ENCODE measurements at regions of chr3 and their contacts with region 1.

Region 1: DNA sequence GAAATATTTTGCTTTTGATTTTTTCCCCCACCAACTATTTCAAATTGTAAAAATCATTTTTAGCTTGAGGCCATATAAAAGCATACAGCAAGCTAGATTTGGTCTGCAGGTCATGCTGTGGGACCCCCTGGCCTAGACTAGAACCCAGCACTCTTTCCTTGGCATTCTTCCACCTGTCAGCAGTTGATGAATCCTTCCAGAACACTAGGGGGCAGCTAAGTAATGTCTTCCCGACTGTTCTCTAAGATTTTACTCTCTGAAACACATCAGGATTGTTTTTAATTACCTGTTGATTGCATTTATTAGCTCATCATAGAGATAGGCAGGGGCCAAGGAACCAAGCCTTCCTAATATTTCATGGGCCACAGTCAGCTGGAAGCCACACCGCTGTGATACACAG is 174.5 kb downstream of the CACNA1D start:
- DNase-seq: no peak
- H3K4me3 ChIP-seq: no peak overlapping the region
- H3K27ac ChIP-seq: no peak overlapping the region
- H3K4me1 ChIP-seq: no peaks in the 10 kb centered on the region
- H3K27me3 ChIP-seq: no peaks in the 10 kb centered on the region
- CTCF ChIP-seq: peak in 2 of 3 experiments; percentile 48 to 57; a peak in 3 of 4 replicates
- EP300 ChIP-seq: no peak
- POLR2A ChIP-seq: no peak
- RAD21 ChIP-seq: peak; percentile 59 to 71

Region 2: DNA sequence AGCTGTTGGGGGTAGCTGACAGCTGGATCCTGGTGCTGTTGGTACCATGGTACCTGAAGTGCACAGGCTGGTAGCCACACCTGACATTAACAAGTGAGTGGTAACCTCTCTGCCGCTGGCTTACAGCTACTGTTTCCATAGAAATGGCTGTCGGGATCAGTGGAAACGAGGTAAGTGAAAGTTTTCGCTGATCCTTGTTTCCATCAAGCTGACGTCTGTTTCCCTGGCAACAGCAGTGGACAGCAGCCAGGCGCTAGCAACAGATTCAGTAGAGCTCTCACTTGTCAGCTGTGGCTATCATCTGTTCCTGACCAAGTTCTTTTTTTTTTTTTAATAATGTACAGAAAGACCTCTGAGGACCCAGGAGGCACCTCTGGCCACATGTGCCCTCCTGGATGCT is 11.2 kb after region 1 on chr3:
- CTCF ChIA-PET with region 1: interaction called, 43 read pairs
- POLR2A ChIA-PET with region 1: no interaction called
- DNase-seq: no peak
- H3K4me3 ChIP-seq: no peak overlapping the region
- H3K27ac ChIP-seq: no peak overlapping the region
- H3K4me1 ChIP-seq: no peaks in the 10 kb centered on the region
- H3K27me3 ChIP-seq: no peaks in the 10 kb centered on the region
- CTCF ChIP-seq: no peak
- EP300 ChIP-seq: no peak
- POLR2A ChIP-seq: no peak
- RAD21 ChIP-seq: no peak

Region 3: GRCh38 chr3:53688989-53689388 is 20.1 kb after region 1 on chr3:
- CTCF ChIA-PET with region 1: interaction called, 43 read pairs
- POLR2A ChIA-PET with region 1: no interaction called
- DNase-seq: peak in 1 of 2 experiments; percentile 43
- H3K4me3 ChIP-seq: no peak overlapping the region
- H3K27ac ChIP-seq: no peak overlapping the region
- H3K4me1 ChIP-seq: no peaks in the 10 kb centered on the region; a peak in 1 of 7 replicates
- H3K27me3 ChIP-seq: no peaks in the 10 kb centered on the region
- CTCF ChIP-seq: peak; percentile 0 to 46 (median 34); a peak in 2 of 4 replicates
- EP300 ChIP-seq: no peak
- POLR2A ChIP-seq: no peak
- RAD21 ChIP-seq: peak; percentile 33 to 40

Measured in H1 (cell line).